ENCODE measurements at regions of chr17 and their contacts with region 1.

Region 1: GRCh38 chr17:63406689-63407330 is 39.3 kb downstream of the CYB561 start:
- DNase-seq: peak in 8 of 9 donors; percentile 40 to 70 (median 60)
- ATAC-seq: peak; percentile 90
- H3K4me3 ChIP-seq: no peak overlapping the region
- H3K4me3 Mint-ChIP-seq: no peak overlapping the region
- H3K27ac ChIP-seq: no peak overlapping the region
- H3K27ac Mint-ChIP-seq: no peak overlapping the region
- H3K4me1 ChIP-seq: no peaks in the 10 kb centered on the region
- H3K4me1 Mint-ChIP-seq: peaks cover 0 to 6% (median 4%) of the 10 kb centered on the region in 7 donors
- H3K27me3 ChIP-seq: no peaks in the 10 kb centered on the region
- H3K27me3 Mint-ChIP-seq: peaks cover 0 to 25% (median 0%) of the 10 kb centered on the region in 5 donors

Region 2: DNA sequence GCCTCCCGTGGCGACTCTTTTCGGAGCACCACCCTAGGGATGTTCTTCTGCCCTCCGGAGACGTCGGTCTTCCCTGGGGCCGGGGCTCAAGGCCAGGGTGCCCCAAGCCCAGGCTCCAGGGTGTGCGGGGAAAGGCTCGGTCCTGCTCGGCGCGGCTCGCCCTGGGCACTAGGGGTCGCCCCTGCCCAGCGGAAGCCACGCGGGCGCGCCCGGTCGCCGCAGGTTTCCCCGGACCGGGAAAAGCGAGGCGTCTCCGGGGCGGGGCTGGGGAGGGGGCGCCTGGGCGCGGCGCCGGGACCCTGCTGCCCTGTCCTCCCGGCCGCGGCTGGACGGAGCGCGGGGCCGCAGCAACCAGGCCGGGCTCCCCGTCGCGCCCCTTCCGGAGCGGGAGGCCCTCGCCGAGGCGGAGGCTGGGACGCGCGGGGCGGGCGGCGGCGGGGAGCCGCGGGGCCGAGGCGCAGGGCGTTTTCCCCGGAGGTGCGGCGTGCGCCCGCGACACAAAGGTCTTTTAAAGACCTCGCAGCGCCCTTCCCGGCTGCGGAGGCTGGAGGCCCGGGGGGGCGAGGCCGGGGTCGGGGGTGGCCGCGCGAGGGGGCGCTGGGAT is 702.9 kb before region 1 on chr17:
- CTCF ChIA-PET with region 1: interaction called, 10 read pairs
- POLR2A ChIA-PET with region 1: interaction called, 3 read pairs
- intact Hi-C with region 1: loop called in 1 of 2 experiments (anchors 5 kb)
- DNase-seq: peak; percentile 31 to 81 (median 71)
- ATAC-seq: peak; percentile 96
- H3K4me3 ChIP-seq: peak overlapping the region; percentile 43
- H3K4me3 Mint-ChIP-seq: peak overlapping the region in 8 of 10 donors; percentile 25 to 77 (median 51)
- H3K27ac ChIP-seq: no peak overlapping the region
- H3K27ac Mint-ChIP-seq: no peak overlapping the region
- H3K4me1 ChIP-seq: peaks cover 5 to 9% of the 10 kb centered on the region in 2 donors
- H3K4me1 Mint-ChIP-seq: peaks cover 0 to 7% (median 4%) of the 10 kb centered on the region in 7 donors
- H3K27me3 ChIP-seq: no peaks in the 10 kb centered on the region
- H3K27me3 Mint-ChIP-seq: peaks cover 0 to 39% (median 6%) of the 10 kb centered on the region in 5 donors

Region 3: GRCh38 chr17:62995377-62995885 is 411.4 kb before region 1 on chr17:
- CTCF ChIA-PET with region 1: interaction called, 4 read pairs
- POLR2A ChIA-PET with region 1: no interaction called
- intact Hi-C with region 1: loop called (anchors 1 to 10 kb)
- DNase-seq: no peak
- ATAC-seq: peak; percentile 84
- H3K4me3 ChIP-seq: no peak overlapping the region
- H3K4me3 Mint-ChIP-seq: no peak overlapping the region
- H3K27ac ChIP-seq: no peak overlapping the region
- H3K27ac Mint-ChIP-seq: no peak overlapping the region
- H3K4me1 ChIP-seq: no peaks in the 10 kb centered on the region
- H3K4me1 Mint-ChIP-seq: peaks cover 0 to 31% (median 26%) of the 10 kb centered on the region in 7 donors
- H3K27me3 ChIP-seq: no peaks in the 10 kb centered on the region
- H3K27me3 Mint-ChIP-seq: peaks cover 0 to 2% (median 0%) of the 10 kb centered on the region in 5 donors

Region 4: GRCh38 chr17:63082273-63082993 is 324.4 kb before region 1 on chr17:
- CTCF ChIA-PET with region 1: interaction called, 3 read pairs
- POLR2A ChIA-PET with region 1: no interaction called
- intact Hi-C with region 1: loop called in 1 of 2 experiments (anchors 2 kb)
- DNase-seq: no peak
- ATAC-seq: no peak
- H3K4me3 ChIP-seq: no peak overlapping the region
- H3K4me3 Mint-ChIP-seq: no peak overlapping the region
- H3K27ac ChIP-seq: no peak overlapping the region
- H3K27ac Mint-ChIP-seq: no peak overlapping the region
- H3K4me1 ChIP-seq: no peaks in the 10 kb centered on the region
- H3K4me1 Mint-ChIP-seq: peaks cover 0 to 5% (median 0%) of the 10 kb centered on the region in 7 donors
- H3K27me3 ChIP-seq: no peaks in the 10 kb centered on the region
- H3K27me3 Mint-ChIP-seq: peaks cover 0 to under 1% (median 0%) of the 10 kb centered on the region in 5 donors

Region 5: DNA sequence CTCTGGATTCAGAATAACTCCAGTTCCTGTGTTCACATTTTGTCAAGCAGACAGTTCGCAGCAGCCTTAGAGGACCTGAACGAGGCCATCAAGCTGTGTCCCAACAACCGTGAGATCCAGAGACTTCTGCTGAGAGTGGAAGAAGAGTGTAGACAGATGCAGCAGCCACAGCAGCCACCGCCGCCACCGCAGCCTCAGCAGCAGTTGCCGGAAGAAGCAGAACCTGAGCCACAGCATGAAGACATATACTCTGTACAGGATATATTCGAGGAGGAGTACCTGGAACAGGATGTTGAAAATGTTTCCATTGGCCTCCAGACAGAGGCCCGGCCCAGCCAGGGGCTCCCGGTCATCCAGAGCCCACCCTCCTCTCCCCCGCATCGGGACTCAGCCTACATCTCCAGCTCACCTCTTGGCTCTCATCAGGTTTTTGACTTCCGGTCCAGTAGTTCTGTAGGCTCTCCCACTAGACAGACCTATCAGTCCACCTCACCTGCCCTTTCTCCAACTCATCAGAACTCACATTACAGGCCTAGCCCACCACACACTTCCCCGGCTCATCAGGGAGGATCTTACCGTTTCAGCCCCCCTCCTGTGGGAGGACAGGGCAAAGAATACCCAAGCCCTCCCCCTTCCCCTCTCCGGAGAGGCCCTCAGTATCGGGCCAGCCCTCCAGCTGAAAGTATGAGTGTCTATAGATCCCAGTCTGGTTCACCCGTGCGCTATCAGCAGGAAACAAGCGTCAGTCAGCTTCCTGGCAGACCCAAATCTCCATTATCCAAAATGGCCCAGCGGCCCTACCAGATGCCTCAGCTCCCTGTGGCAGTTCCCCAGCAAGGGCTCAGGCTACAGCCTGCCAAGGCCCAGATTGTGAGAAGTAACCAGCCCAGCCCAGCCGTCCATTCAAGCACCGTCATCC is 13.4 kb after region 1 on chr17:
- CTCF ChIA-PET with region 1: interaction called, 11 read pairs
- POLR2A ChIA-PET with region 1: no interaction called
- intact Hi-C with region 1: no loop called
- DNase-seq: peak in 7 of 9 donors; percentile 29 to 63 (median 52)
- ATAC-seq: peak; percentile 79
- H3K4me3 ChIP-seq: no peak overlapping the region
- H3K4me3 Mint-ChIP-seq: peak overlapping the region; percentile 18 to 80 (median 62)
- H3K27ac ChIP-seq: peak overlapping the region; percentile 19
- H3K27ac Mint-ChIP-seq: peak overlapping the region; percentile 80 to 93 (median 86)
- H3K4me1 ChIP-seq: peaks cover 0 to 15% of the 10 kb centered on the region in 2 donors
- H3K4me1 Mint-ChIP-seq: peaks cover 11 to 28% (median 18%) of the 10 kb centered on the region in 7 donors
- H3K27me3 ChIP-seq: no peaks in the 10 kb centered on the region
- H3K27me3 Mint-ChIP-seq: peaks cover 0 to 37% (median 0%) of the 10 kb centered on the region in 5 donors

Region 6: GRCh38 chr17:63478791-63479494 is 72.1 kb after region 1 on chr17:
- CTCF ChIA-PET with region 1: no interaction called
- POLR2A ChIA-PET with region 1: no interaction called
- intact Hi-C with region 1: loop called in 1 of 2 experiments (anchors 1 kb)
- DNase-seq: peak; percentile 41 to 75 (median 59)
- ATAC-seq: peak; percentile 84
- H3K4me3 ChIP-seq: no peak overlapping the region
- H3K4me3 Mint-ChIP-seq: peak overlapping the region in 9 of 10 donors; percentile 13 to 67 (median 49)
- H3K27ac ChIP-seq: no peak overlapping the region
- H3K27ac Mint-ChIP-seq: no peak overlapping the region
- H3K4me1 ChIP-seq: peaks cover 5 to 14% of the 10 kb centered on the region in 2 donors
- H3K4me1 Mint-ChIP-seq: peaks cover 0 to 18% (median 8%) of the 10 kb centered on the region in 7 donors
- H3K27me3 ChIP-seq: peaks cover 0 to 12% of the 10 kb centered on the region in 2 donors
- H3K27me3 Mint-ChIP-seq: peaks cover 13 to 44% (median 23%) of the 10 kb centered on the region in 5 donors

Region 7: DNA sequence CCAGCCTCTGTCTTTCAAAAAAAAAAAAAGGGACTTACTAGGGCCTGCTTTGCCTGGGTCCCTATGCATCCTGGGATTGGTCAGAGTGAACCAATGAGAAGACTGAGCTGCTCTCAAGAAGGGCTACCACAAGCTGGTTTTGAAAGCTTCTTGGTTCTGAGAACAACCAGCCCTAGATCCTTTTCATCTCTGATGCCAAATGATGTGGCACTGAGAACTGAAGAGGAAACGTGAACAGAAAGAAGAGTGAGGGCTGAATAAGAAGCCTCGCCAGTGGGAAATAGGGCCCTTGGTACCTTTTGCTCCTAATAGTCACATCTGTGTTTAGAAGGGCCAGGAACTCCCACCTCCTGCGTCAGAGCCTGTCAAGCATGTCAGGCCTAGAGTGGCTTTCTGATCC is 204.5 kb after region 1 on chr17:
- CTCF ChIA-PET with region 1: interaction called, 16 read pairs
- POLR2A ChIA-PET with region 1: no interaction called
- intact Hi-C with region 1: loop called in 1 of 2 experiments (anchors 1 kb)
- DNase-seq: peak in 5 of 9 donors; percentile 3 to 57 (median 25)
- ATAC-seq: peak; percentile 47
- H3K4me3 ChIP-seq: no peak overlapping the region
- H3K4me3 Mint-ChIP-seq: peak overlapping the region in 9 of 10 donors; percentile 10 to 74 (median 58)
- H3K27ac ChIP-seq: peak overlapping the region; percentile 52
- H3K27ac Mint-ChIP-seq: peak overlapping the region; percentile 85 to 98 (median 93)
- H3K4me1 ChIP-seq: peaks cover 25 to 28% of the 10 kb centered on the region in 2 donors
- H3K4me1 Mint-ChIP-seq: peaks cover 22 to 30% (median 29%) of the 10 kb centered on the region in 7 donors
- H3K27me3 ChIP-seq: no peaks in the 10 kb centered on the region
- H3K27me3 Mint-ChIP-seq: no peaks in the 10 kb centered on the region